ENCODE measurements at regions of chr5 and their contacts with region 1.

Region 1: DNA sequence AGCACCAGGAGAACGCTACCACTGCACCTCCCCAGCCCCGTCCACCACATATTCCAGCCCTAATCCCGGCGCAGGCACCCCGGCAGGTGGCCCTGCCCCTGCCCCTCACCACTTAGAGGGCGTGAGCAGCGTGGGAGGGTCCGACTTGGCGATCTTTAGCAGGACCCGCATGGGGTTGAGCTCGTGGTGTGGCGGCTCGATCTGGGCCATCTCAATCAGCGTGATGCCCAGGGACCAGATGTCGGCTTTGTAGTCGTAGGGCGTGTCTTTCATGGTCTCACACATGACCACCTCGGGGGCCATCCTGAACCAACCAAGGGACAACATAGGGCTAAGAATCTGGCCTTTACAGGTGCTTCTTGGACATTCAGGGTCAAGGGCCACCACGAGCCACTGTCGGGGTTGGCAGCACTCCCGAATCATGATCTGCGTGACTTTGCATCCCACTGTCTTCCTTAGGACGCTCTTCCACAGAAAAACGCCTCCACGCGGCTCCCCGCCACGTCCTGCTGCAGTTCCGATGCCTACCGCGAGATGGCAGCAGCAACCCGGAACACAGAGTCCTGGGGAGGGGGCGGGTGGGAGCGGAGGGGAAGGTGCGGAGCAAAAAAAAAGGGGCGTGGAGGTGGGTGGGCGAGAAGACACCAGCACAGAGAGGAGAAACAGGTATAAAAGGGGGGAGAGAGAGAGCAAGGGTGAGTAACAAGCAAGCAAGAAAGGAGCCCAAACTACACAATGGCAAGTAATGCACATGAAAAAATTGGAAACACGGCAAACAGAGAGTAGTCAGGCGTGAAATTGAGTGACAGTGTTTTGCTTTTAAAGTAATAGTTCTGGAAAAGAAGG is 81.3 kb downstream of the STK10 start:
- DNase-seq: no peak
- H3K4me3 ChIP-seq: 0 out of 2 replicates have a peak overlapping the region, but pooled peaks have one; percentile 2
- CTCF ChIP-seq: peak; percentile 89

Region 2: DNA sequence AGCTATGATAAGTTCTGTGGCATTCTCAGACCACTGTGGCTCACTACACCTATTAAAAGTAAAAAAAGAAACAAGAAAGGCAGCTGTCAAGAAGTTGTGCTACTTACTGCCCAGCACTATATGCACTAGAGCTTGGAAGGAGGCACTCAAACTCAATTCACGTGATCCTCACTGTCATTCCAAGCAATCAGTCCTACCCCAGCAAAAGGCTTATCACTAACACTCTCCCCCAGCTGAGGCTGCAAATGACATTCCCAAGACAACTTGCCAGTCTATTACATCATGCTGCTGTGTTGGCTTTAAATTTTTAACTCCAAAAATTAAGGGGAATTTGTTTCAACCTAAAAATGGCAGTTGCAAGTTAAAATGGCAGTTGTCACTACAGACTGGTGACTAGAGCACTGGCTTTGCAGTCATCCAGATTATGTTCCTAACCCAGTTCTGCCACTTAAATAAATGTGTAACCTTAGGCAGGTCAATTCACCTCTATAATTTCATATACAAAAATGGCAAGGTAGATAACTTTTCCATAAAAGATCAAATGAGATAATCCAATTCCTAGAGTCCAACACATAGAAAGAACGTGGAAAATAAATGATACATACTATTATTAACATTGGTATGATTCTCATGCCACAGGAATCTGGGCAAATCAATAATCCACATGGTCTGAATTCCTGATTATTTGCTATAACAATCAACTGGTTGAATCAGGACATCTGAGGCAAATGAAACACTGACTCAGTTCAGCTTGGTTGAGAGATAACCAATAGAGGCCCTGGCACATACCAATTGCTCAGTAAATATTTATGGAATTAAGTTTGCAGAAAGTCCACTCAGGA is 152.7 kb before region 1 on chr5:
- CTCF ChIA-PET with region 1: no interaction called
- POLR2A ChIA-PET with region 1: no interaction called
- DNase-seq: peak; percentile 38
- H3K4me3 ChIP-seq: no peak overlapping the region
- CTCF ChIP-seq: no peak

Region 3: GRCh38 chr5:172123269-172123692 is 16.5 kb after region 1 on chr5:
- CTCF ChIA-PET with region 1: interaction called, 17 read pairs
- POLR2A ChIA-PET with region 1: interaction called, 6 read pairs
- DNase-seq: no peak
- H3K4me3 ChIP-seq: no peak overlapping the region
- CTCF ChIP-seq: peak; percentile 56

Measured in AG04449 (cell line).